Calu3 (cell line): ENCODE measurements at regions of chr4 and their contacts with region 1.

Region 1: DNA sequence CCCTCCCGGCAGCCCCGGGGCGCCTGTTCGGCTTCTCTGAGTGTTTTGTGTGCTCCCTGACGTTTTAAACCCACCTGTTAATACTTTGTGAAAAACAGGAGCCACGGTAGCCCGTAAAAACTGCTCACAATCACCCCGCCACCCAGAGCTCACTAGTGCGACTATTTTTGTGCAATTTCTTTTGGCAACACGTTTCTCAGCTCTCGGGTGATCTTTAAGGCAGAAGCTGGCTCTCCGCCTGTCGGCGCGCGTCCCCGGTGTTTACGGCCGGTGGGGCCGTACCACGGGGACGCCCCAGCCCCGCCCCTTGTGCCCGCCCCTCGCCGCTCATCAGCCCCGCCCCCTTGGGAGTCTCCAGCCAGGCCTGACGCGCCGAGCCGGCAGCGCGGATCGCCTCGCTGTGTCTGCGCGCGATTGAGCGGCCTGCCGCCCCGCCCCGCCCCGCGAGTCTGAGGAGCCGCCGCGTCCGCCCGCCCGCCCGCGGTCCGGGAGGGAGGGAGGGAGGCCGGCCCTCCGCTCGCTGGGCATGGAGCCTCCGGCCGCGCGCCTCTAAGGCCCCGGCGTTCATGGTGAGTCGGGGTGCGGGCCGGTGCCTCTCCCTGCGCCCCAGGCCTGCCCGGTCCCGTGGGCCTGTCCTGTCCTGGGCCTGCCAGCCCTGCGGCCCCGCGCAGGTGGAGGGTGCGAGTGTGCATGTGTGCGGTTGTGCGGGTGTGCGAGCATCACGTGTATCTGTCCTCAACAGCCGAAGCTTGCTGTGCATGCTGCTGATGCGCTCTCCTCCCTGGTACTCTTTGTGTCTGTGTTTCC is 56.2 kb upstream of the TADA2B start:
- DNase-seq: peak; percentile 92
- H3K4me3 Mint-ChIP-seq: peak overlapping the region; percentile 96
- H3K27ac Mint-ChIP-seq: peak overlapping the region; percentile 90
- H3K4me1 Mint-ChIP-seq: peaks cover 32% of the 10 kb centered on the region
- H3K27me3 Mint-ChIP-seq: no peaks in the 10 kb centered on the region
- CTCF ChIP-seq: no peak

Region 2: DNA sequence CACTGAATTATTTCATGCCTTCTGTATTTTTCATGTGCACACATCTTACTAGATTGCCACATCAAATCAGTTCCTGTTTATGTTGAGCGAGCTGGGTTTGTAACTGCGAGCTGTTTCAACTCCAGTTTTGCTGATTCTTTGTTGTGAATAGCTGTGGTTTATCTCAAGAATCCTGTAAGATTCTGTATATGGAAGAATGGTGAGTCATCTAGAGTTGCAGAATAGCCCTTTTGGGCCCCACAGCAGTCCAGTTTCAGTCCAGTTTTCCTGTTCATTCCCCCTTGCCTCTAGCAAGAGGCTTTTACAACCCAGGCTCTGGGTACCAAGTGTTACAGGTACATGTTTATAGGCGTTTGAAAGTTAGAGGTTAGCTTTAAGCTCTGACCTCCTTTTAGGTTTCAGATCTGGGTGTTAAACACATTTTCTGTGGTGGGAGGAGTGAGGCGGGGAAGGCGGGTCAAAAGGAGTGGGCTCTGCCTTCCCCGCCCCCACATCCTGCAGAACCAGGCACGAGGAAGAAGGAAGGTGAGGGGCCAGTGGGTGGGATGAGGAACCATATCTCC is 44.7 kb before region 1 on chr4:
- CTCF ChIA-PET with region 1: no interaction called
- intact Hi-C with region 1: no loop called
- DNase-seq: peak; percentile 20
- H3K4me3 Mint-ChIP-seq: peak overlapping the region; percentile 55
- H3K27ac Mint-ChIP-seq: peak overlapping the region; percentile 85
- H3K4me1 Mint-ChIP-seq: peaks cover 41% of the 10 kb centered on the region
- H3K27me3 Mint-ChIP-seq: no peaks in the 10 kb centered on the region
- CTCF ChIP-seq: no peak

Region 3: GRCh38 chr4:7070729-7071511 is 83.9 kb after region 1 on chr4:
- CTCF ChIA-PET with region 1: no interaction called
- intact Hi-C with region 1: loop called (anchors 10 kb)
- DNase-seq: peak; percentile 86
- H3K4me3 Mint-ChIP-seq: no peak overlapping the region
- H3K27ac Mint-ChIP-seq: no peak overlapping the region
- H3K4me1 Mint-ChIP-seq: peaks cover 8% of the 10 kb centered on the region
- H3K27me3 Mint-ChIP-seq: peaks cover 30% of the 10 kb centered on the region
- CTCF ChIP-seq: peak; percentile 83